Vagina (tissue), 2 donors: ENCODE measurements at regions of chr1 and their contacts with region 1.

Region 1: GRCh38 chr1:160328184-160328583 is 14.9 kb downstream of the COPA start:
- DNase-seq: no peak
- H3K4me3 ChIP-seq: no peak overlapping the region
- H3K27ac ChIP-seq: no peak overlapping the region
- H3K4me1 ChIP-seq: no peaks in the 10 kb centered on the region
- H3K27me3 ChIP-seq: no peaks in the 10 kb centered on the region
- CTCF ChIP-seq: no peak
- POLR2A ChIP-seq: no peak

Region 2: GRCh38 chr1:160197226-160197625 is 131.0 kb before region 1 on chr1:
- intact Hi-C with region 1: no loop called
- DNase-seq: no peak
- H3K4me3 ChIP-seq: no peak overlapping the region
- H3K27ac ChIP-seq: no peak overlapping the region
- H3K4me1 ChIP-seq: peaks cover 11% of the 10 kb centered on the region
- H3K27me3 ChIP-seq: no peaks in the 10 kb centered on the region
- CTCF ChIP-seq: no peak
- POLR2A ChIP-seq: no peak

Region 3: DNA sequence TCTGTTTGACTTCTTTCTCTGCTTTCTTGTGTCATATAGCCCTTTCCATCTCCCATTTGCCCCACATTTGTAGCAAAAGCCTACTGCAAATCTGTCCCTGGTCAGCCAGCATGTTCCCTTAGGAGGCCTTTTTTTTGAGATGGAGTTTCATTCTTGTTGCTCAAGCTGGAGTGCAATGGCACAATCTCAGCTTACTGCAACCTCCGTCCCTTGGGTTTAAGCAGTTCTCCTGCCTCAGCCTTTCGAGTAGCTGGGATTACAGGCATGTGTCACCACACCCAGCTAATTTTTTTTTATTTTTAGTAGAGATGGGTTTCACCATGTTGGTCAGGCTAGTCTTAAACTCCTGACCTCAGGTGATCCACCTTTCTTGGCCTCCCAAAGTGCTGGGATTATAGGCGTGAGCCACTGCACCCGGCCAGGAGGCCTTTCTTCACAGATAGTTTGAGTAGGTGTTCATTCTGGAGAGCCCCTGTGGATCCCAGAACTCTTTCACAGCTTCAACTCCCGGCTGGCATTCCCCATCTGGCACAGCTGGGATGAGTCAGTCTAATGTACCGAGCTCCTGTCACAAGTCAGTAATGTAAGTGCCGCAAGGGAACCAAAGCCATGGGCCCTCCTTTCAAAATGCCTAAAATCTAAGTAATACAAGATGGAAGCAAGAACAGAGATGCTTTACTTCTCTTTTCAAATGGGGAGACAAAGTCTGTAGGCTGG is 29.3 kb after region 1 on chr1:
- intact Hi-C with region 1: loop called (anchors 1 kb)
- DNase-seq: peak in 1 of 2 donors; percentile 67
- H3K4me3 ChIP-seq: no peak overlapping the region
- H3K27ac ChIP-seq: no peak overlapping the region
- H3K4me1 ChIP-seq: no peaks in the 10 kb centered on the region
- H3K27me3 ChIP-seq: no peaks in the 10 kb centered on the region
- CTCF ChIP-seq: no peak
- POLR2A ChIP-seq: no peak

Region 4: DNA sequence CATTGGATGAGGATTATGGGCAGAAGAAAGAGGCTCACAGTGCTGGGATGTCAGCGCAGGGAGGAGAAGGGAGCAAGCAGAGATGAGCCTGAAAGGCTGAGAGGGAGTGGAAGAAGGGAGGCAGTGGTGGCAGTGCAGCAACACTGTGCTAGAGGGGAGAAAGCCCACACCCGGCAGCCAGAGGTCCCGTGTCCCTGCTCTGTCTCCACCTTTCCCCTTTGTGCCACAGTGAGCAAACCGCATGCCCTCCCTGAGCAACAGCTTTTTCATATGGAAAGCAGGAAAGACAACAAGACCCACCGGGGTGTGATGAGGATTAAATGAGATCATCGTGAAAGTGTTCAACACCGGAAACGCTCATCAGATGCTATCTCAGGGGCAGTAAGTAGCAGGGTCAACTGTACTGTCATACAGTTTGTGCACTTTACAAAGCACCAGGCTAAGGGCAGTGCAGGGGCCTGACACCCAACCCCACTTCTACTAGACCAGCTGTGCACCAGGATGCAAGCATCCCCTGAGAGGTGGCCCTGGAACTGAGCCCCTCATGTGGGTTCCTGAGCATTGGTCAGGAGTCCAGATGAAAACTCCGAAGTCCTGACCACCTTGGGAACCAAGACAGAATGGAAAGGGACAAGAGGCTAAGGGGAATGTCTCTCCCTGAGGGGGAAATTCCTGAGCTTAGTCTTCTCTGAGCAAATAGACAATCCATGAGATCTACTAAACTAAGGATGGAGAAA is 47.8 kb after region 1 on chr1:
- intact Hi-C with region 1: no loop called
- DNase-seq: peak; percentile 34 to 69
- H3K4me3 ChIP-seq: no peak overlapping the region
- H3K27ac ChIP-seq: no peak overlapping the region
- H3K4me1 ChIP-seq: peaks cover 11% of the 10 kb centered on the region
- H3K27me3 ChIP-seq: no peaks in the 10 kb centered on the region
- CTCF ChIP-seq: no peak
- POLR2A ChIP-seq: no peak